Esophagus muscularis mucosa (tissue), 4 donors: ENCODE measurements at regions of chr12 and their contacts with region 1.

Region 1: GRCh38 chr12:89352492-89353187 is at the start of gene DUSP6:
- DNase-seq: peak; percentile 99
- H3K4me3 ChIP-seq: peak within 1 kb of the TSS; percentile 75 to 90 (median 83)
- H3K27ac ChIP-seq: peak within 1 kb of the TSS; percentile 98 to 99 (median 99)
- H3K4me1 ChIP-seq: peaks cover 19 to 62% (median 57%) of the 10 kb centered on the region in 4 donors
- H3K27me3 ChIP-seq: no peaks in the 10 kb centered on the region
- CTCF ChIP-seq: no peak
- EP300 ChIP-seq: no peak
- POLR2A ChIP-seq: no peak
- total RNA-seq, gene DUSP6: 62.2 to 108 (median 77.4) TPM

Region 2: DNA sequence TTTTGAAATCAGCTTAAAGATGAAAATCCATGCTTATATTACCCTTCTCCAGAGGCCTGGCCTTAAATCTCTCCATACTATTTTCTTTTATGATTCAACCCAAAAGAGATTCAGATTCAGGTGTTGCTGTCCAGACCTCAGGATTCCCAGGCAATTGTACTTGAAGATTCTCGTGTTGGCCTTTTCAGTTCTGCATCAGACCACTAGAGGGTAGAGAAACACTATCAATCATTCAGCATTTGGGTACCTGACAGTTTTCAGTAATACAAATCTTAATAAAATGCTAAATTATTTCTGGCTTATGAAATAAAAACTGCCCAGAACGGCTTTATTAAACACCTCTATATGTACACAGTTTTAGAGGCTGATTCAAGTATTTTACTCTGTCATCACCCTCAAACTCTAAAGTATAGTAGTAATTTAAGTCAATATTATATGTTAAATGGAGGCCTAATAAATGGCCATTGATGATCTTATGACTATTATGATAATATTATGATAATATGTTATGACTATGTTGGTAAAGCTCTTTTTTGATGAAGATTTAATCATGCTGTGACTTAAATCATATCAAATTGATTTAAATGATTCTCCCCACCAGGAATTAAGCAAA is 301.5 kb before region 1 on chr12:
- intact Hi-C with region 1: loop called (anchors 5 kb)
- DNase-seq: peak; percentile 42
- H3K4me3 ChIP-seq: no peak overlapping the region
- H3K27ac ChIP-seq: no peak overlapping the region
- H3K4me1 ChIP-seq: no peaks in the 10 kb centered on the region
- H3K27me3 ChIP-seq: no peaks in the 10 kb centered on the region
- CTCF ChIP-seq: peak; percentile 92 to 95 (median 95)
- EP300 ChIP-seq: no peak
- POLR2A ChIP-seq: no peak

Region 3: DNA sequence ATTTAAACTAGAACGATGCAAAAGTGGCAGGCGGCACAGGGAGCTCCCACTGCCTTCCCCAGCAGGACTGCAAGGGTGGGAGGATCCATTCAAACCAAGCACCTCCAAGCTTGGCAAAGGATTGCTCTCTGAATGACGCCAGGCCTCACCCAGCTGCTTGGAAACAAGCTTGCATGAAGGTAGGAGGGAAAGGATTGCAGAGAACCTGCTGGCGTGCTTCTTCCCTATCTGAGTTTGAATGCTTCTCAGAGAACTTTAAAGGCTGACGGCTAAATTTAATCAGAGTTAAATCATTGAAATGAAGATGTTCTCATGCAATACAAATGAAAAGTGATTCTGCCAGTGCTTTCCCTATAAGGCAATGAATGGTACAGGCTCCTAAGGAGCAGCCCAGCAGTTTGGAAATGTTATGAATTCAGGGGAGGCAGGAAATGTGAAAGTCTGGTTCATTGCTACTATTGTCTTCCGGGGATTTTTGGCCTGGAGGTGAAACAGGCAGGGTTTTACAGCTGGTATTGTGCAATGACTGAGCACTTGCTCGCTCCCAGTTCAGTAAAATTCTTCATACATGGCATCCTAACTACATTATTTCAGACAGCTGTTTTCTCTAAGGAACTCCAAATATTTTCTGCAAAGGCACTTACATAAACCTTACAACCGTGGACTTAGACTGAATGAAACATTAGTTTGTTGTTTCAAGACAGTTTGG is 31.6 kb after region 1 on chr12:
- intact Hi-C with region 1: loop called (anchors 2 kb)
- DNase-seq: no peak
- H3K4me3 ChIP-seq: peak overlapping the region; percentile 8 to 36 (median 26)
- H3K27ac ChIP-seq: peak overlapping the region; percentile 68 to 85 (median 82)
- H3K4me1 ChIP-seq: peaks cover 35 to 56% (median 49%) of the 10 kb centered on the region in 4 donors
- H3K27me3 ChIP-seq: no peaks in the 10 kb centered on the region
- CTCF ChIP-seq: no peak
- EP300 ChIP-seq: no peak
- POLR2A ChIP-seq: no peak

Region 4: GRCh38 chr12:89451841-89452251 is 99.2 kb after region 1 on chr12:
- intact Hi-C with region 1: loop called (anchors 2 kb)
- DNase-seq: no peak
- H3K4me3 ChIP-seq: peak overlapping the region in 3 of 4 donors; percentile 3 to 24 (median 6)
- H3K27ac ChIP-seq: peak overlapping the region; percentile 82 to 86 (median 83)
- H3K4me1 ChIP-seq: peaks cover 30 to 68% (median 57%) of the 10 kb centered on the region in 4 donors
- H3K27me3 ChIP-seq: no peaks in the 10 kb centered on the region
- CTCF ChIP-seq: no peak
- EP300 ChIP-seq: no peak
- POLR2A ChIP-seq: no peak

Region 5: DNA sequence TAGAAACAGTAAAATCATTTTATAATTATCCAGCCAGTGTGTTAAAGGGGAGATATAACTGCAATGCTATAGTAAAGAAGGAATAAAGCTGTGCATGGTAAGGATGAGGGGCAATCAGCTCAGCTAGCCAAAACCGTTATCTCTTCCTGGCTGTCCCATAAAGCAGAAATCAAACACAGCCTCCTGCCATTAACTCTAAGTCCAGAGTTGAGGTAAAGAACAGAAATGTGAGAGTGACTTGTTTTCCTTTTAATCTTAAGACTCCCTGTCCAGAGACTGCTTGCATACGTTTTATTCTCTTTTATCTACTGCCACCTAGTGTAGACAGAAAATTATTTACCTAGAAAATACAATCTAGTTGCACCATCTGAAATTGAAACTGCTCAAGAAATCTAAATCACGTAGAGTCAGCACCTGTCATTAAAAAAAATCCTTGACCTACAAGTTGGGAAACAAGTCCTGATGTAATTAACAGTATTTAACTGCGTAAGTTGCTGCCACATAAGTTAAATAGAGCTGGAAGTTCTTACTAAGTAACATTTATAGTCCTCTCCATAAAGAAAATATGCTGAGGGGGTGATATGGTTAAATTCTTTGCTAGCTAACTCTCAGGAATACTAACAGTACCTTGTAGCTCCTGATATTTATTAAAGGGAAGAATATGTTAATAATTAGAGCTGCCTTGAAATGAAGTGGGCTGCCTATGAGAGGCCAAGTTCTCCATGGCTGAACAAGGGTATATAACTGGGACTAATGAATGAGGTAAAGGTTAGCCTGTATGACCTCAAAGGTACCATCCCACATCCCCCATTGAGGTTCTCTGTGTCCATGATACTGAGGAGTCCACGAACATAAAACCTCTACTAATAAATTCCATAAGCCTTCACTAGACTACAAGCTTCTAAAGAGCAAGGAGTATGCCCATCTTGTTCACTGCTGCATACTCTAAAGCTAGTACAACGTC is 109.3 kb after region 1 on chr12:
- intact Hi-C with region 1: loop called (anchors 2 kb)
- DNase-seq: no peak
- H3K4me3 ChIP-seq: peak overlapping the region; percentile 24 to 36 (median 24)
- H3K27ac ChIP-seq: peak overlapping the region; percentile 20 to 57 (median 52)
- H3K4me1 ChIP-seq: peaks cover 3 to 18% (median 15%) of the 10 kb centered on the region in 4 donors
- H3K27me3 ChIP-seq: no peaks in the 10 kb centered on the region
- CTCF ChIP-seq: peak; percentile 58 to 70 (median 66)
- EP300 ChIP-seq: no peak
- POLR2A ChIP-seq: no peak

Region 6: GRCh38 chr12:89524541-89525285 is 172.1 kb after region 1 on chr12 and contains the start of gene GALNT4:
- intact Hi-C with region 1: loop called (anchors 10 kb)
- DNase-seq: peak; percentile 98
- H3K4me3 ChIP-seq: peak within 1 kb of the TSS; percentile 77 to 92 (median 82)
- H3K27ac ChIP-seq: peak within 1 kb of the TSS; percentile 89 to 94 (median 90)
- H3K4me1 ChIP-seq: peaks cover 38 to 57% (median 49%) of the 10 kb centered on the region in 4 donors
- H3K27me3 ChIP-seq: no peaks in the 10 kb centered on the region
- CTCF ChIP-seq: peak; percentile 57 to 84 (median 60)
- EP300 ChIP-seq: no peak
- POLR2A ChIP-seq: peak; percentile 5
- total RNA-seq, gene GALNT4: 5.0 to 6.2 (median 5.4) TPM